Mammary epithelial cell (primary cell): ENCODE measurements at regions of chr15 and their contacts with region 1.

Region 1: GRCh38 chr15:73851689-73852088 is 21.7 kb upstream of the TBC1D21 start:
- DNase-seq: peak; percentile 50
- H3K4me3 ChIP-seq: no peak overlapping the region
- H3K27ac ChIP-seq: no peak overlapping the region
- H3K4me1 ChIP-seq: no peaks in the 10 kb centered on the region
- H3K27me3 ChIP-seq: peaks cover 4% of the 10 kb centered on the region
- CTCF ChIP-seq: no peak

Region 2: GRCh38 chr15:73794443-73795133 is 57.1 kb before region 1 on chr15:
- CTCF ChIA-PET with region 1: no interaction called
- dilution Hi-C with region 1: loop called (anchors 5 kb)
- in situ Hi-C with region 1: no loop called
- intact Hi-C with region 1: no loop called
- DNase-seq: peak; percentile 44
- H3K4me3 ChIP-seq: no peak overlapping the region
- H3K27ac ChIP-seq: no peak overlapping the region
- H3K4me1 ChIP-seq: no peaks in the 10 kb centered on the region
- H3K27me3 ChIP-seq: no peaks in the 10 kb centered on the region
- CTCF ChIP-seq: no peak

Region 3: DNA sequence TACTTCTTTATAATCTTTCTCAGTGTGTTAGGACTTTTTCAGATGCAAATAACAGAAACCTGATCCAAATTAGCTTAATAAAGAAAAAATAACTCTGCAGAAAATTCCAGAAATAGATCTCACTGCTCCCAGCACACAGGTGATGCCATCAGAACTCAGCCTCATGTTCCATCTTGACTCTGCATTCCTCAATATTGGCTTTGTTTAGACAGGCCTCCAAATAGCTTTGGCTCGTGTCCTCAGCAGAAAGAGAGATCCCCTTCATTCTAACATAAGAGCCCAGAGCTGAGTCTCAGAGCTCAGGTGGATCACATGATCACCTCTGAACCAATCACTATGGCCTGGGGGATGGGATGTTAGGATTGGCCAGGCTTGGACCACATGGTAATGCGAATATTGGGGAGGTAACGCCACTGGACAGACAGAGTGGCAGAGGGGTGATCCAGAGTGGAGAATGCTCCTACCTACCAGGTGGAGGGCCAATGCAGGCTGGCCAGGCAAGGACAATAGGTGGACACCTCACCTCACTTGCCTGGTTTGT is 24.9 kb before region 1 on chr15:
- CTCF ChIA-PET with region 1: no interaction called
- dilution Hi-C with region 1: no loop called
- in situ Hi-C with region 1: no loop called
- intact Hi-C with region 1: loop called (anchors 2 kb)
- DNase-seq: peak; percentile 44
- H3K4me3 ChIP-seq: no peak overlapping the region
- H3K27ac ChIP-seq: no peak overlapping the region
- H3K4me1 ChIP-seq: no peaks in the 10 kb centered on the region
- H3K27me3 ChIP-seq: no peaks in the 10 kb centered on the region
- CTCF ChIP-seq: no peak

Region 4: DNA sequence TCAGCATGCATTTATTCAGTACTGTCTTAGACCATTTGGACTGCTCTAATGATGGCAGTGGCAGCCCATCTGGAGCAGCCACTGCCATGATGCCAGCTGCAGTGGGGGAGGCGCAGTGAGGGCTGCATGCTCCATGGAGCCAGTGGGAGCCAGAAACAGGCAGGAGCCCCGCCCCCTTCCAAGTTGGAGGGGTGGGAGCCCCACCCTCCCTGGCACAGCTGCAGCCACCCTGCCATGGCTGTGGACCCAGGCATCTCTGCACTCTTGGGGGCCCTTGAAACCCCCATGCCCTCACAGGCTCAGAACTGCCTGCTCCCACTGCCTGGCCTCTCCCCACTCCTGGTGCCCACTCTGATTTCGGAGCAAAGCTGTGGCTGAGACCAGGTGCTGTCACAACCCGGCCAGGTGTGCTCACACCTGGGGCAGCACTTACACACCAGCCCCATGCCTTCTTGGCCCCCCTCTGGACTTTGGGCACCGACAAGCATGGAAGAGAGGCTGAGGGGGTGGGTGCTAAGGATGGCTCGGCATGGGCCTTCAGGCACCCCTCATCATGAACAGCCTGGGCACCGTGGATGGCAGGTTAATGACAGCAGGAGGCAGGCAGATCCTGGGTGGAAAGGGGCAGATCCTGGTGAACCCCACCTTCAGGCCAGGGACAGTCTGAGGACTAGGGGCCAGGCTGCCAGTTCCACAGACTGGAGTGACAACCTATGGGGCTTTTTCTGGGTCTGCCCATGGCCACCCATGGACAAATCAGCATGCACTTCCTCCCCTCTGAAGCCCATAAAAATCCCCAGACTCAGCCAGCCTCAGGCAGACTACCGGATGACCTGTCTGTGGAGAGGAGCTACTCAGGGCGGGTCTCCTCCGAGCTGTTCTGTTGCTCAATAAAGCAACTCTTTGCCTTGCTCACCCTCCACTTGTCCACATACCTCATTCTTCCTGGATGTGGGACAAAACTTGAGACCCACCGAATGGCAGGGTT is 39.9 kb after region 1 on chr15:
- CTCF ChIA-PET with region 1: no interaction called
- dilution Hi-C with region 1: loop called (anchors 5 kb)
- in situ Hi-C with region 1: no loop called
- intact Hi-C with region 1: no loop called
- DNase-seq: peak; percentile 22
- H3K4me3 ChIP-seq: no peak overlapping the region
- H3K27ac ChIP-seq: no peak overlapping the region
- H3K4me1 ChIP-seq: no peaks in the 10 kb centered on the region
- H3K27me3 ChIP-seq: no peaks in the 10 kb centered on the region
- CTCF ChIP-seq: no peak

Region 5: DNA sequence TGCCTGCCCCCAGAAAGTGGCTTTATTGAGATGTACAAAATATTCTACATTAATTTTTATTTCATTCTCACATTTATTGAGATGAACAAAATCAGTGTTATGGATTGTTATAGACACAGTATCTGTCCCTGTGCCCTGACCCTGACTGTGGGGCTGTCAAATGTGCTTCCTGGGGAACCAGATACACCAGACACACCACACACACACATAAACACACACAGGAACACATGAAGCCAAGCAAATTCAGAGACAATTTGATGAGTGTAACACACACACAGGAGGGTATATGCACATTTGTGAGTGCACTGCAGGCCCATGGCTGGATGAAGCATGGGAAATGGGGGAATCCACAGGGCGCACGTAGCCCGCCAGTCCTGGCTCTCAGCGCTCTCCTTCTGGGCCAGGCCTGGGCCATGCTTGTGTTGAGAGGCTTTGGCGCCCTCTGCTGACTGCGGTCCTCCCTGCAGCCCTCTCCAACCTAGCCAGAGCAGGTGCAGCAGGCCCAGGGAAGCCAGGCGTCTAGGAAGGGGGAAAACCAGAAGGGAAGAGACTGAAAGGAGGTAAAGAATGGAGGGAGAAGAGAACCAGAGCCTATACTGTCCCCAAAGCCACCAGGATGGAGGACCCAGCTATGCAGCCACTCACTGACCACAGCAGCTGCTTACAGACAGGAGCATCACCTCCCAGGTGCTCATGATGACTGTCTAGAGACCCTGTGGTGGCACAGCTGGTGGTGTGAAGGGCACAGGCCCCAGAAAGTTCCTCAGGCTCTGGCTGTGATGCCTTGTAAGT is 56.5 kb after region 1 on chr15:
- CTCF ChIA-PET with region 1: no interaction called
- dilution Hi-C with region 1: no loop called
- in situ Hi-C with region 1: no loop called
- intact Hi-C with region 1: no loop called
- DNase-seq: peak; percentile 45
- H3K4me3 ChIP-seq: no peak overlapping the region
- H3K27ac ChIP-seq: no peak overlapping the region
- H3K4me1 ChIP-seq: no peaks in the 10 kb centered on the region
- H3K27me3 ChIP-seq: no peaks in the 10 kb centered on the region
- CTCF ChIP-seq: peak; percentile 90 to 97